ENCODE measurements at regions of chr7 and their contacts with region 1.

Region 1: DNA sequence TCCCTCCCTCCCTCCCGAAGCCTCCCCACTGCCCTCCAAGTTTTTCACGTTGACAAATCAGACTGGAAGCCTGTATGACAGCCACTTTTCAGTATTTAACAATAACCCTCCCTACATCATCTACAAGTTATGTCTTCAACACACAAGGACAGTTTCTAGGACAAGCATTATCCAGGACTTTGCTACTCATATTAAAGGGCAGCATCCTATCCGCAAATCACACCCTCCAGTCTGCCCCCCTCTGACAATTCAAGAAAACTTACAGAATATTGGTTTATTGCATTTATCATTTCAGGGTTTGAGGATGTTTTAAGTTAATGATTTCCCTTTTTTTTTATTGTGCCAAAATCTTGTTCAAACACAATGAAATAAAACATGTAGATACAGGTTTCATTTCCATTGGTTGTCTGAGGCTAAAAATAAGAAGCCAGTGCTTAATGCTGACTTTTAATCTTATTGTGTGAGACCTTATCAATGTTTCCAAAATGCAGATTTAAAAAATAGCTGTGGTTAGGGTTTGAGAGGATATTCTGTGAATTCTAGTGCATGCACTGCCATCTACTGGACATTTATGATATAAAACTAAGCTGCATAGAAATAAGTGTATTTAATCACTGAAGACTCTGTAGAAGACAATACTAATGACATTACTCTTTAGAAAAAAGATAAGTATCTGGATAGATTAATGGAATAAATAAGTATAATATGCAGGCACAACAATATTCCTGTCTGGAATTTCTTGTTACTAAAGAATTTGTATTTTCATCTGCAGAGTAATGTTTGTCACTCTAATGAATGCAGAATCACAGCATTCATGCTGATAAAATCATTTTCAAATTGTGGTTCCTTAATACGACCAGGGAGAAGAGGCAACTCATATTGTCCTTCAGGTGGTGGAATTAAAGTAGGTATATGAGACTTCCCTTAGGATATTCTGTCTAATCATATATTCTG is 64.1 kb downstream of the CAV1 start:
- DNase-seq: no peak
- H3K4me3 ChIP-seq: no peak overlapping the region
- H3K27ac ChIP-seq: no peak overlapping the region
- H3K4me1 ChIP-seq: peaks cover 0 to 6% (median 2%) of the 10 kb centered on the region in 4 experiments; a peak in 5 of 7 replicates
- H3K27me3 ChIP-seq: no peaks in the 10 kb centered on the region
- CTCF ChIP-seq: peak in 2 of 3 experiments; percentile 33 to 37; a peak in 2 of 4 replicates
- EP300 ChIP-seq: no peak
- POLR2A ChIP-seq: no peak
- RAD21 ChIP-seq: peak; percentile 76 to 78

Region 2: DNA sequence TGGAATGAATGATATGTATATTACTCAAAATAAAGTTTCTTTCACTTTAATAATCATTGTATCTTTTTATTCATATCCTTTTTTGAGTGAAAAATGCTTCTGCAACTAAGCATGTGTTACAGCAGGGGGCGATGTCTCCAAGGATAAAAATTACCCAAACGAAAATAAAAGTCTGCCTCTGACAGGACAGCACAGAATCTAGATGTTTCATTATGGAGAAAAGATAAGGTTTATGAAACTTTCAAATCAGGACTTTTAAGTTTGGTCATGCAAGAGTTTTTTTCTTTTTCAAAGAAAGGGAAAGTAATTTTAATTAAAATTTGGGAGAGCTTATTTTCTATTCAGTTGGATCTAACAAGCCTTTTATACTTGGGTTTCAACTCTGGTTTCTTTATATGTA is 330.2 kb before region 1 on chr7:
- CTCF ChIA-PET with region 1: interaction called, 107 read pairs
- POLR2A ChIA-PET with region 1: interaction called, 3 read pairs
- DNase-seq: no peak
- H3K4me3 ChIP-seq: no peak overlapping the region
- H3K27ac ChIP-seq: no peak overlapping the region
- H3K4me1 ChIP-seq: no peaks in the 10 kb centered on the region
- H3K27me3 ChIP-seq: no peaks in the 10 kb centered on the region
- CTCF ChIP-seq: peak in 2 of 3 experiments; percentile 50 to 58; a peak in 2 of 4 replicates
- EP300 ChIP-seq: no peak
- POLR2A ChIP-seq: no peak
- RAD21 ChIP-seq: peak; percentile 86 to 90

Region 3: DNA sequence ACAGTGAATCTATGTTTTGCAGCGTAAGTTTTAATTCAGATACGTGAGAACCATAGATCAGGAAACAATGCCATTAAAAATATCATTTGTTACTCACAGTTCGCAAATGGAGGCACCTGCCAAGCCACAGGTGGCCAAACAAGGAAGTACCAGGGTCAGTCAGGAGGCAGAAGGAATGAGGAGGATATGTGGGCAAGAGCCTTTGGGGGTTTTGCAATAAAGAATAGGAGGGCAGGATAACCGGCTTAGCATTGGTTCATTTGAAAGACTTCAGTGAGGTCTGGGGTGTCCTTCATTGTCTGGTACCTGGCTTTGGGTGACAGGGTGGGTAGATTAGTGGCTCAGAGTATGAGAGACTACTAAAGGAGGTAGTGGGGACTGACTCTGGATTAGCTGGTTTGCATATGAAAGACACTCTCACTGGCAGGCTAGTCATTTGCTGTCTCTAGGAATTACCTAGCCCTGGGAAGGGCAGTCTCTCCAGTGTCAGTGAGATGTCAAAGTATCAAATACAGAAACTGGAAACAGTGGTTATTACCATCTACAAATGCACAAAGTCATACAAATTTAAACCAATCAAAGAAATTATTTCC is 221.6 kb before region 1 on chr7:
- CTCF ChIA-PET with region 1: no interaction called
- POLR2A ChIA-PET with region 1: no interaction called
- DNase-seq: no peak
- H3K4me3 ChIP-seq: no peak overlapping the region
- H3K27ac ChIP-seq: no peak overlapping the region
- H3K4me1 ChIP-seq: peaks cover 0 to 3% (median 2%) of the 10 kb centered on the region in 4 experiments; a peak in 2 of 7 replicates
- H3K27me3 ChIP-seq: no peaks in the 10 kb centered on the region
- CTCF ChIP-seq: no peak
- EP300 ChIP-seq: no peak
- POLR2A ChIP-seq: no peak
- RAD21 ChIP-seq: no peak

Region 4: DNA sequence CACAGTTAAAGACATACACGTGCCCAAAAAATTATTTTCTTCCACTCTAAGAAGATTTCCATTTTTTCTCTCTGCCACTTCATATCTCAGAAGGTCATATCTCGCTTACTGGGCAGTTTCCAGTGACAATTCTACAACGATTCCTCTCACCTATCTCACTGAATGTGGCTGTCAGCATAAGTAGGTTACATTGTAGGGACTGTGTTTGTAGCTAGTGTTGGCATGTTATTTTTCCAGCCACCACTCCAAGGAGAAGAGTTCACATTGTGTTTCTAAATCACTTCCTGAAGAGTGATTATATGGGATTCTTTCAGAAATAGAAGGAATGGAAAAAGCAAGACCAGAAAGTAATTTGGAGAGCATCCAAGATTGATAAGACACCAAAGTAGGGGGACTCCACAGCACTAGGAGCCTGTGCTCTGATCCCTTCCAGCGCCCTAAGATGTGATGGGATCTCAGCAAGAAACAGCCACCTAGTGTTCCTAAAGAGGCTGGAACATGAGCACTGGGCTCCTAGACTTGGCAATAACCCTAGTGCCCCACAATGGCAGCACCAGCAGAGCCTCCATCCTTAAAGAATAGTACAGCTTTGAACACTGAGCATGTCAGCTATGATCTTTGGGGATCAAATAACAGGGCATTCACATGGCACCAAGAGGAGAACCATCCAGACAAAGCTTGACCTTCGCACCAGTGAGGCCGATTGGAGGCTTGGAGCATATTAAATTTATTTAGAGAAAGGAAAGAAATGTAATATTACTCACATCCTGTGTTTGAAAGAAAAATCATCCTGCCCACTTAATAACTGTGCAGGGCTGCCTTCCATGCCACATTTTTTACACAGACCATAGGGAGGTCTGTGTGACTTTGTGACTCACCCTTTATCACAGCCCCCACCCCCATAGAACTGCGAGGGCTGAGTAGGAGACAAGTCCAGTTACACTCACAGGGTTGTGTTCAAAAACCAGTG is 12.3 kb before region 1 on chr7:
- CTCF ChIA-PET with region 1: interaction called, 33 read pairs
- POLR2A ChIA-PET with region 1: no interaction called
- DNase-seq: no peak
- H3K4me3 ChIP-seq: no peak overlapping the region
- H3K27ac ChIP-seq: no peak overlapping the region
- H3K4me1 ChIP-seq: no peaks in the 10 kb centered on the region
- H3K27me3 ChIP-seq: no peaks in the 10 kb centered on the region
- CTCF ChIP-seq: no peak
- EP300 ChIP-seq: no peak
- POLR2A ChIP-seq: no peak
- RAD21 ChIP-seq: no peak; a peak in 1 of 4 replicates

Region 5: DNA sequence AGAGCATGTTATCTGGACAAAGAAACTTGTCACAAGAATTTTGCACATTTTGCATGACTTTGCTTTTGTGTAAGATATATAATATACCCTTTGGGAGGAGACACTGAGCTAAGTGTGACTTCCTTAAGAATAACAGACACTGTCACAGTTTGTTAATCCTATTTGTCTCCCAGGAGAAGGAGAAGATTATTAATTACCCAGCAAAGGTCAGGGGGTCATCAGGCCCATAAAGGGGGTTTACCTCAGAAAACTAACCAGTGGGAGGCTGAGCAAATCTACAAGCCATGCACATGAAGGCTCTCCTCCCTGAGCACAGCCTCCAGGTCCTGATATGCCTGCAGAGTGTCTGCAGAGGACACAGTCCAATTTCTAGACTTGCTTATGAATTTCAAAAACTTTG is 72.9 kb after region 1 on chr7:
- CTCF ChIA-PET with region 1: no interaction called
- POLR2A ChIA-PET with region 1: no interaction called
- DNase-seq: no peak
- H3K4me3 ChIP-seq: no peak overlapping the region
- H3K27ac ChIP-seq: no peak overlapping the region
- H3K4me1 ChIP-seq: no peaks in the 10 kb centered on the region
- H3K27me3 ChIP-seq: no peaks in the 10 kb centered on the region
- CTCF ChIP-seq: no peak
- EP300 ChIP-seq: no peak
- POLR2A ChIP-seq: no peak
- RAD21 ChIP-seq: no peak

Region 6: GRCh38 chr7:116780940-116781339 is 192.0 kb after region 1 on chr7:
- CTCF ChIA-PET with region 1: interaction called, 57 read pairs
- POLR2A ChIA-PET with region 1: no interaction called
- DNase-seq: no peak
- H3K4me3 ChIP-seq: no peak overlapping the region
- H3K27ac ChIP-seq: no peak overlapping the region
- H3K4me1 ChIP-seq: peaks cover 0 to 10% (median 8%) of the 10 kb centered on the region in 4 experiments; a peak in 4 of 7 replicates
- H3K27me3 ChIP-seq: no peaks in the 10 kb centered on the region
- CTCF ChIP-seq: no peak
- EP300 ChIP-seq: no peak
- POLR2A ChIP-seq: no peak
- RAD21 ChIP-seq: no peak

Region 7: DNA sequence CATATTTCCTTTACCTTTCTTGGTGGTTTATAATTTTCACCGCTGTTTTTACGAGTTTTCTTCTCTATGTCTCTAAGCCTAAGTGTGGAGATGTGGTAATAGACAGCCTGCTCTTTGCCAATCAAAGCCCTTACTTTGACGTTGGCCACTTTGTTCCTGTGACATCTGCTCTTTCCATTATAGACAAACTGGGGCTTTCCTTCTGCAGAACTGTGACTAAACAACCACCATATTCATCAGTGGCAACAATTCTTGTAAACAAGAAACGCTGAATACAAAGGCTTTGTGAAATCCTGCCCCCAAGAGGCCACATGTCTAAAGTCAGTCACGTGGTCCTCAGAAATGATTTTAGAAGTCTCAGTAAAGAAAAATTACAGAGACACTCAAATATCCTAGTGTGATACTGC is 213.8 kb after region 1 on chr7:
- CTCF ChIA-PET with region 1: interaction called, 18 read pairs
- POLR2A ChIA-PET with region 1: no interaction called
- DNase-seq: no peak
- H3K4me3 ChIP-seq: no peak overlapping the region
- H3K27ac ChIP-seq: no peak overlapping the region
- H3K4me1 ChIP-seq: peaks cover 0 to 5% (median 0%) of the 10 kb centered on the region in 4 experiments; a peak in 1 of 7 replicates
- H3K27me3 ChIP-seq: no peaks in the 10 kb centered on the region
- CTCF ChIP-seq: peak in 2 of 3 experiments; percentile 31 to 56; a peak in 3 of 4 replicates
- EP300 ChIP-seq: no peak
- POLR2A ChIP-seq: no peak
- RAD21 ChIP-seq: peak; percentile 35 to 44; a peak in 3 of 4 replicates

Measured in H1 (cell line).